Dorsolateral prefrontal cortex (tissue), 120 donors: ENCODE measurements at regions of chr11 and their contacts with region 1.

Region 1: DNA sequence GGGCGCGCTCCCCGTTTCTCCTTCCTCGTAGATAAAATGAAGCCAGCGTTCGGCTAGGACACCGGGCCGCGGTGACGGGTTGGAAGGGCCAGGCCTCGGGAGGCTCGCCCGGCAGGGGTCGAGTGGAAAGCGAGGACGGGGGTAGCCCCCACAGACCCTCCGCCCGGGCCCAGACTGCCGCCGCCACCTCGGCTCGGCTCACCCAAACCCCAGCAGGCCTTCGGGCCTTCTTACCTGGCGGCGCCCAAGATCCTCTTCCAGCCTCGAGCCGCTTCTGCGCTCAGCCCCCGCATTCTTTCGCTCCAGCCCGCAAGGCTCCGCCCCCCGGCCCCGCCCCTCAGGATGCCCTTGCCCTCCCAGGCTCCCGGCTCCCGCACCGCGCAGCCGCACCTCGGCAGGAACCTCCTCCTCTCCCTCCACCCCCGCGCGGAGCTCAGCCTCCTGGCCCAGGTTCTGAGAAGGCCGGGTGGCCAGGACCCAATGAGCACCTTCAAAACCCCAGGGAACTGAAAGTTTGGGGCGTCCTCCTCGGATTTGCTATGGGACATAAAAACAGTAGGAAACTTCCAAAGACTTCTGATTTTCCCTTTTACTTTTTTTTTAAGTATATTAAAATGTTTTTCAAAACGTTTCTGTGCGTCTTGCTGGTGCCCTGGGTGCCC is at the start of gene CD59:
- DNase-seq: peak; percentile 83 to 98 (median 92)
- H3K4me3 ChIP-seq: peak within 1 kb of the TSS; percentile 67 to 98 (median 91)
- H3K27ac ChIP-seq: peak within 1 kb of the TSS in 58 of 59 donors; percentile 17 to 98 (median 87)
- H3K27me3 ChIP-seq: no peaks in the 10 kb centered on the region
- CTCF ChIP-seq: peak in 4 of 56 donors; percentile 10 to 35 (median 18)
- total RNA-seq, gene CD59: 235 to 598 (median 367) TPM

Region 2: GRCh38 chr11:33542921-33543320 is 193.4 kb before region 1 on chr11:
- intact Hi-C with region 1: loop called in 1 of 2 experiments (anchors 10 kb)
- DNase-seq: peak in 9 of 10 donors; percentile 41 to 71 (median 60)
- H3K4me3 ChIP-seq: no peak overlapping the region
- H3K27ac ChIP-seq: peak overlapping the region in 16 of 59 donors; percentile 0 to 66 (median 24)
- H3K27me3 ChIP-seq: no peaks in the 10 kb centered on the region
- CTCF ChIP-seq: peak; percentile 25 to 75 (median 61)

Region 3: GRCh38 chr11:33700425-33701271 is 35.6 kb before region 1 on chr11 and contains the start of gene C11orf91:
- intact Hi-C with region 1: loop called in 1 of 2 experiments (anchors 5 kb)
- DNase-seq: peak; percentile 81 to 98 (median 92)
- H3K4me3 ChIP-seq: peak within 1 kb of the TSS; percentile 51 to 83 (median 71)
- H3K27ac ChIP-seq: peak within 1 kb of the TSS; percentile 7 to 90 (median 79)
- H3K27me3 ChIP-seq: no peaks in the 10 kb centered on the region
- CTCF ChIP-seq: peak in 11 of 56 donors; percentile 5 to 33 (median 14)
- total RNA-seq, gene C11orf91: 0.50 to 1.8 (median 0.85) TPM in 26 of 120 experiments, not detected in the others